ENCODE measurements at regions of chr7 and their contacts with region 1.

Region 1: GRCh38 chr7:5083311-5083711 is 37.7 kb downstream of the RBAK start:
- DNase-seq: no peak
- ATAC-seq: no peak
- H3K4me3 Mint-ChIP-seq: no peak overlapping the region
- H3K27ac Mint-ChIP-seq: no peak overlapping the region
- H3K4me1 Mint-ChIP-seq: peaks cover 6% of the 10 kb centered on the region
- H3K27me3 Mint-ChIP-seq: peaks cover 9% of the 10 kb centered on the region

Region 2: DNA sequence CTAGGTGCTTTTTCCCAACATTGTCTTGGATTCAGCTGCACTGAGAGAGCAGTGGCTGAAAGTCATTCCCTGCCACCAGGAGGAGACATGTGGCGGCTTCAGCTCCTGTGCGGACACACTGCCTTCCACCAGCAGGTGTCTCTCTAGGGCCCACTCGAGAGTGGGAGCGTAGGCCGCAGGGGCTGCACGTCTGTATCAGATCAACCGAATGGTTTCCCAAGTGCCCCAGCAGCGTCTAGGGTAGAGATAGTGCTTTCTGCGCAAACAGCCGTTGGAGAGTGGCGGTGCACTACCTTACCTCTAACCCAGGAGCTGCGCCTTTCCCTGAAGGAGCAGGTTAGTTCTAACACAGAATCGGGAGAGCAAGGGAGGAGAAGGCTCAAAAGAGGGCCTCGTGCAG is 253.1 kb before region 1 on chr7:
- CTCF ChIA-PET with region 1: interaction called, 10 read pairs
- POLR2A ChIA-PET with region 1: no interaction called
- DNase-seq: peak; percentile 74
- ATAC-seq: peak; percentile 91
- H3K4me3 Mint-ChIP-seq: no peak overlapping the region
- H3K27ac Mint-ChIP-seq: no peak overlapping the region
- H3K4me1 Mint-ChIP-seq: no peaks in the 10 kb centered on the region
- H3K27me3 Mint-ChIP-seq: peaks cover 1% of the 10 kb centered on the region

Region 3: DNA sequence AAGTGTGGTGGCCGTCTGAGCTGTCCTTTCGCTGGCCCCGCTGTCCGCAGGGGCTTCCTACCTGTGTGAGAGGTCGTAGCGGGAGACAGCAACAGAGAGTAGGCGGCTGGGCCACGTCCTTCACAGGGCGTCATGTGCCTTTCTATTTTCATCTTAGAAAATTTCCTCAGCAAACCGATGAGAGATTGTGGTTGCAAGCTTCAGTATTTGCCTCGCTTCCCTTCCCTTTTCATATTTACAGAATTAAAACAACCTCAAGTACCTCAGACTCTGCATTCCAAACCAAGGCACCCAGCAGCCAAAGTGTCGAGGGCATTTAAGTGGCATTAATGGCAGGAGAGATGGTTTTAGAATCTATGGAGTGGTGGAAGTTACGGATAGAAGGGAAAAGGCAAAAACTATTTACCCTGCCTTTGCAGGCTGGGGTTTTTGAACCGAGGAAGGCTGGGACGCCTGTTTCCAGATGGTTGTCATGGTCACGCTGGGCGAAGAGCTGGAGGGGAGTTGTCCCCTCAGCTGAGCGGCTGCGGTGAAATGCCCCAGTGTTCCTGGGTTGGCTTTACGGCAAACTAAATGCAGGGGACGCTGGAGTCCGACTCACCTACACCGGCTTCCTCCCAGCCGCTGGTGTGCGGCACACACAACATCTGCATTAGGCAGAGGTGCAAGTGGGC is 148.6 kb after region 1 on chr7:
- CTCF ChIA-PET with region 1: no interaction called
- POLR2A ChIA-PET with region 1: no interaction called
- DNase-seq: peak; percentile 29
- ATAC-seq: no peak
- H3K4me3 Mint-ChIP-seq: no peak overlapping the region
- H3K27ac Mint-ChIP-seq: peak overlapping the region; percentile 41
- H3K4me1 Mint-ChIP-seq: peaks cover 23% of the 10 kb centered on the region
- H3K27me3 Mint-ChIP-seq: peaks cover 4% of the 10 kb centered on the region

Measured in activated CD8-positive, alpha-beta T cell treated with anti-CD3 and anti-CD28 coated beads, Interleukin-2, amount 10 ng/mL, durations not matched to agents 7 days and 5 days (primary cell).